Posterior vena cava (tissue), 2 donors: ENCODE measurements at regions of chr10 and their contacts with region 1.

Region 1: DNA sequence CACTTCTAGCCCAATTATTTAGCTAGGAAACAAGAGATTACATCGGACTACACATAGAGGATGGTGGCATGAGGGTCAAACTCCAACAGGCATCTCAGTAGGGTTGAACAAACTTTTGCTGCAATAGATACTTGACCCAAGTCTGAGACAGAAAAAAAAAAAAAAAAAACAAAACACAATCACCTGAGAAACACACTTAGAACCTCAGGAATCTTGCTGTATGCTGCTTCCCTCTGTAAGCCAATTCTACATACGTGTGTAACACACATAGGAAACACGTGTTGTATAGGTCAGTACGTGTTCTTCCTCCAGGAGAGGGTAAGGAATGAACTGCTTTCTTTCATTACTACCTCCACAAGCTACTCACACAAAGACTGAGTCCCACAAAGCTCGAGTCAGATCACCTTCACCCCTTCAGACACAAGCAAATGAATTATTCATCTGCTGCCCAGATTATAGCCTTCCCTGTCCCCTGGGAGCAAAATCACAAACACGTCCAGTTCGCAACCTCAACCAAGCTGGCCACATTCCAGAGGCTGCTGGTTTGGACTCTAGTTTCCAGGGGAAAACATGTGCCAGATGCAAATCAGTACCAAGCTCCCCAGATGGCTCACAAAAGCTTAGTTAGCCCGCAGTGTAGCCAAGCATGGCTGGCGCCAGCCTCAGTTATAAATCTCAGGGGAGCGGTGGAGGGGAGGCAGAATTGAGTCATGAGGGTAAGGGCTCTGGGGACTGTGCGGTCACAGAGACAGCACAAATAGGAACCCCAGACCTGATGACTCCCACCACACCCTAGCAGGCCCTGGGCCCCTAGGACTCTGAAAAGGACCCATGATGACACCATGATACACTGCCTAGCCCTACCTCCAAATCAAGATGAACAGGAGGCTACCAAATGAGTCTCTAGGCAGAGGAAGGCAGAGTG is 15.1 kb downstream of the PSAP start:
- DNase-seq: peak; percentile 89

Region 2: GRCh38 chr10:70267161-70267933 is 1568.6 kb before region 1 on chr10:
- intact Hi-C with region 1: no loop called
- DNase-seq: no peak

Region 3: GRCh38 chr10:71771821-71772617 is 63.9 kb before region 1 on chr10:
- intact Hi-C with region 1: loop called in 1 of 2 experiments (anchors 10 kb)
- DNase-seq: peak; percentile 93

Region 4: DNA sequence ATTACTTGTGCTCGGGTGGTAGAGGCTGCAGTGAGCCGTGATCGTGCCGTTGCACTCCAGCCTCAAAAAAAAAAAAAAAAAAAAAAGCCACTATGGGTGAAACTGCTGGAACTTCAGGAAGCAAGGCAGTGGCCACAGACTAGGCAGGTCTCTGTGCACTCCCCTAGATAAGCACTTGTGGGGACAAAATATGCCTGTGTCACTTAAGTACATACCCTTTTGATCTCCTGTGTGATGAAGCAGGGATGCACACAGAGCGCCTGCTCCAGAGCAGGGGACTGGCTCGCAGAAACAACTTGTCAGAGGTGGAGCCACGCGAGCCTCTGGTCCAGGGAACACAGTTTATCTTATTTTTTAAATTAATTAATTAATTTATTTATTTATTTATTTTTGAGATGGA is 58.0 kb after region 1 on chr10:
- intact Hi-C with region 1: loop called in 1 of 2 experiments (anchors 10 kb)
- DNase-seq: peak; percentile 32